OCI-LY7 (cell line): ENCODE measurements at regions of chr22 and their contacts with region 1.

Region 1: GRCh38 chr22:22195265-22196017 is 49.1 kb upstream of the VPREB1 start:
- DNase-seq: peak; percentile 99
- H3K4me3 ChIP-seq: peak overlapping the region; percentile 79
- H3K27ac ChIP-seq: peak overlapping the region; percentile 95
- H3K4me1 ChIP-seq: peaks cover 57% of the 10 kb centered on the region
- CTCF ChIP-seq: peak; percentile 99

Region 2: GRCh38 chr22:22030493-22031182 is 164.8 kb before region 1 on chr22:
- CTCF ChIA-PET with region 1: interaction called, 3 read pairs
- POLR2A ChIA-PET with region 1: interaction called, 10 read pairs
- intact Hi-C with region 1: loop called (anchors 5 kb)
- DNase-seq: peak; percentile 96
- H3K4me3 ChIP-seq: peak overlapping the region; percentile 68
- H3K27ac ChIP-seq: peak overlapping the region; percentile 94
- H3K4me1 ChIP-seq: peaks cover 99% of the 10 kb centered on the region
- CTCF ChIP-seq: peak; percentile 82

Region 3: GRCh38 chr22:22099833-22100812 is 95.3 kb before region 1 on chr22:
- CTCF ChIA-PET with region 1: no interaction called
- POLR2A ChIA-PET with region 1: interaction called, 3 read pairs
- intact Hi-C with region 1: loop called (anchors 2 kb)
- DNase-seq: peak; percentile 71
- H3K4me3 ChIP-seq: peak overlapping the region; percentile 55
- H3K27ac ChIP-seq: peak overlapping the region; percentile 84
- H3K4me1 ChIP-seq: peaks cover 40% of the 10 kb centered on the region
- CTCF ChIP-seq: peak; percentile 86

Region 4: DNA sequence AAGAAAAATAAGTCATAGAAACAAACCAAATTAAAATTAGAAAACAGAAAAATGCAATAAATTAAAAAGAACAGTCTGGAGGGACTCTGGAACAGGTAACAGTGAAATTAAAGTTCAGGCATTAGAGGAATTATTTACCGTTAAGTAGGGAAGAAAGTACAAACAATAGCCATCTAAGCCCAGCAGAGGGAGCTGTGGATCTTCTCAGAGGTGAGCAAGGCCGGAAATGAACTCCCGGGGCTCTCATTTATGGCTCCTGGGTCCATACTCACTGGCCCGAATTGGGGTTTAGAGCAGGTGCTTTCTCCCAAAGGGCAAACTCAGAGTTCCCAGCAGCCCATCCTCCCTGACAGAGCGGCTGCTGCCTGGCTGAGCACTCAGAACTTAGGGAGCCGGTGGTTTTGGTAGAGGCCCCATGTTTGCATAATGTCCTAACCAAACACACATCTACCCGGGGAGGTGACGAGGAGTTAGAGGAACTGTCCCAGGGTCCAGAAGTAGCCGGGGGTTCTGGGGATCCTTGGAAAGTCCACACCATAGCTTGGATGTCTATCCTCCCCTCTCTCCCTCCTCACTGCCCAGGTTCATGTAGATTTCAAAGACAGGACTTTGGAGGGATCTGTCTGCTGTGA is 38.6 kb before region 1 on chr22:
- CTCF ChIA-PET with region 1: interaction called, 3 read pairs
- POLR2A ChIA-PET with region 1: interaction called, 93 read pairs
- intact Hi-C with region 1: loop called (anchors 1 kb)
- DNase-seq: peak; percentile 94
- H3K4me3 ChIP-seq: peak overlapping the region; percentile 46
- H3K27ac ChIP-seq: peak overlapping the region; percentile 84
- H3K4me1 ChIP-seq: peaks cover 55% of the 10 kb centered on the region
- CTCF ChIP-seq: peak; percentile 96

Region 5: DNA sequence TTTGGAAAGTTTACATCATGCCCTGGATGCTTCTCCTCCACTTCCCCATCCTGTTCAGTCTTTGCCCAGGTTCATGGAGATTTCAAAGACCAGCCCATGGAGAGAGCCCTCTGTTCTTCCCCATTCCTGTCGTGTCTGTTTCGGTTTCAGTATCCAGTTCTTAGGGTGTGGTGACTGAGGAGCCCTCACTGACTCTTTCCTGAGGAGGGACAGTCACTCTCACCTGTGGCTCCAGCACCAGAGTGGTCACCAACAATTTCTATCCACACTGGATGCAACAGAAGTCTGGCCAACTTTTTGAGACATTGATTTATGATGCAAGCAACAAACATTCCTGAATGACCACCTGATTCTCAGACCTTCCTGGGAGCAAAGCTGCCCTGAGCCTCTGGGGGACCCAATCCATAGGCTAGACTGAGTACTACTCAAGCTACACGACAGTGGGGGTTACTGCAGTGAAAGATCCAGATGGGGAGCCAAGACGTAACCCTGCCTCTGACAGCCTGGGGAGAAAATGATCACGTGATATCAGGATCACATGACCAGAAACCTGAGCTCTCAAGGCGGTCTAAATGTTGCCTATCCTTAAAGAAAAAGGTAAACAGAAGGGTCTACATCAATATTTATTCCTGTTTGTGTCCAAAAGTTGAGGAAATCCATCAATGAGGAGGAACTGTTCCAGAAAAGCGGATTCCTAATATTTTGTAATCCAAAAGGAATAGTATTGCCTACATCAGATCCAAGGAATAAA is 27.1 kb before region 1 on chr22:
- CTCF ChIA-PET with region 1: interaction called, 9 read pairs
- POLR2A ChIA-PET with region 1: interaction called, 93 read pairs
- intact Hi-C with region 1: loop called (anchors 1 kb)
- DNase-seq: peak; percentile 96
- H3K4me3 ChIP-seq: peak overlapping the region; percentile 69
- H3K27ac ChIP-seq: peak overlapping the region; percentile 99
- H3K4me1 ChIP-seq: peaks cover 84% of the 10 kb centered on the region
- CTCF ChIP-seq: no peak

Region 6: GRCh38 chr22:22558972-22559603 is 363.6 kb after region 1 on chr22 and contains the start of gene PRAME:
- CTCF ChIA-PET with region 1: no interaction called
- POLR2A ChIA-PET with region 1: no interaction called
- intact Hi-C with region 1: no loop called
- DNase-seq: peak; percentile 89
- H3K4me3 ChIP-seq: no peak within 1 kb of the TSS
- H3K27ac ChIP-seq: no peak within 1 kb of the TSS
- H3K4me1 ChIP-seq: peaks cover 14% of the 10 kb centered on the region
- CTCF ChIP-seq: peak; percentile 96
- total RNA-seq, gene PRAME: 0.28 and 0.70 TPM in 2 replicates